OCI-LY7 (cell line): ENCODE measurements at regions of chr5 and their contacts with region 1.

Region 1: GRCh38 chr5:73170522-73170921 is 2.5 kb upstream of the TMEM174 start:
- DNase-seq: peak; percentile 52
- H3K4me3 ChIP-seq: no peak overlapping the region
- H3K27ac ChIP-seq: no peak overlapping the region
- H3K4me1 ChIP-seq: peaks cover 19% of the 10 kb centered on the region
- CTCF ChIP-seq: peak; percentile 82

Region 2: DNA sequence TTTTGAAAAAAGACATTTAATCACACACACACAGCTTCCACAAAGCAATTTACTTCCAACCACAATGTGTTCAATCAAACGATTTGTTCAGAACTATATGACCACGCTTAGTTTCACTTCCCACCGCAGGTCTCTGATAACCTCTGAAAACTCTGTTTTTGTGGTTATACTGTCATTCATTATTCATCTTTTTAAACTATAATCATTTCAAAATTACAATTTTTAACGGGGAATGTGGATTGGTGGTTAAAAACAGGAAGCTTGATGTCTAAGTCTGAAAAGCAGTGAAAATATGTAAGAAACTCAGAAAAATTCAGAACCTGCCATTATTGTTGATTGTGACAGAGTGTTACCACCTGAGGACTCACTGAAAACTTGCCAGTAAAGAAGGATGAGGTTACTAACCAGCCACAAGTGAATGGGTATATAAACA is 10.3 kb before region 1 on chr5:
- CTCF ChIA-PET with region 1: no interaction called
- POLR2A ChIA-PET with region 1: interaction called, 14 read pairs
- intact Hi-C with region 1: no loop called
- DNase-seq: peak; percentile 79
- H3K4me3 ChIP-seq: peak overlapping the region; percentile 57
- H3K27ac ChIP-seq: peak overlapping the region; percentile 91
- H3K4me1 ChIP-seq: peaks cover 91% of the 10 kb centered on the region
- CTCF ChIP-seq: no peak